Common myeloid progenitor, CD34-positive (primary cell): ENCODE measurements at regions of chr16 and their contacts with region 1.

Region 1: GRCh38 chr16:71499775-71500364 is 10.7 kb upstream of the ZNF19 start:
- DNase-seq: peak; percentile 69 to 86 (median 79)
- H3K4me3 ChIP-seq: no peak overlapping the region
- H3K27ac ChIP-seq: no peak overlapping the region
- H3K4me1 ChIP-seq: no peaks in the 10 kb centered on the region
- H3K27me3 ChIP-seq: peaks cover 0 to 3% (median 0%) of the 10 kb centered on the region in 5 experiments

Region 2: GRCh38 chr16:71489122-71489521 is 10.7 kb before region 1 on chr16 and contains the start of gene ZNF19:
- CTCF ChIA-PET with region 1: interaction called, 14 read pairs
- POLR2A ChIA-PET with region 1: interaction called, 3 read pairs
- DNase-seq: no peak
- H3K4me3 ChIP-seq: no peak within 1 kb of the TSS
- H3K27ac ChIP-seq: no peak within 1 kb of the TSS
- H3K4me1 ChIP-seq: peaks cover 2 to 23% (median 10%) of the 10 kb centered on the region in 4 experiments
- H3K27me3 ChIP-seq: peaks cover 0 to 3% (median 0%) of the 10 kb centered on the region in 5 experiments

Region 3: GRCh38 chr16:71520555-71520954 is 20.7 kb after region 1 on chr16:
- CTCF ChIA-PET with region 1: no interaction called
- POLR2A ChIA-PET with region 1: no interaction called
- DNase-seq: no peak
- H3K4me3 ChIP-seq: no peak overlapping the region
- H3K27ac ChIP-seq: no peak overlapping the region
- H3K4me1 ChIP-seq: no peaks in the 10 kb centered on the region
- H3K27me3 ChIP-seq: peaks cover 0 to 10% (median 3%) of the 10 kb centered on the region in 5 experiments

Region 4: DNA sequence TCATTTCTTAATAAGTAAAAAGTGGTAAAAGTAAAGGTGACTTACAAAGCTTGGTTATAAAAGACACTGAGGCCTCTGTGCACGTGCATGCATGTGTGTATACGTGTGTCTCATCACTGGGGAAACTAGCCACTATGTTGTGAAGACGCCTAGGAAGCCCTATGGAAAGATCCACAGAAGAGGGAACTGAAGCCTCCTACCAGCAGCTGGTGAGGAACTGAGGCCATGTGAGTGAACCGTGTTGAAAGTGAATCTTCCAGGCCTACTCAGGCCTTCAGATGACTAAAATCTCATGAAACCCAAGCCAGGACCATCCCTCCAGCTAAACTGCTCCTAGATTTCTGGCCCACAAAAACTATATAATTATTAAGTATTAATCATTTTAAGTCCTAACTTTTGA is 201.0 kb after region 1 on chr16:
- CTCF ChIA-PET with region 1: no interaction called
- POLR2A ChIA-PET with region 1: no interaction called
- DNase-seq: no peak
- H3K4me3 ChIP-seq: no peak overlapping the region
- H3K27ac ChIP-seq: no peak overlapping the region
- H3K4me1 ChIP-seq: no peaks in the 10 kb centered on the region
- H3K27me3 ChIP-seq: no peaks in the 10 kb centered on the region